Naive thymus-derived CD8-positive, alpha-beta T cell (primary cell): ENCODE measurements at regions of chr4 and their contacts with region 1.

Region 1: DNA sequence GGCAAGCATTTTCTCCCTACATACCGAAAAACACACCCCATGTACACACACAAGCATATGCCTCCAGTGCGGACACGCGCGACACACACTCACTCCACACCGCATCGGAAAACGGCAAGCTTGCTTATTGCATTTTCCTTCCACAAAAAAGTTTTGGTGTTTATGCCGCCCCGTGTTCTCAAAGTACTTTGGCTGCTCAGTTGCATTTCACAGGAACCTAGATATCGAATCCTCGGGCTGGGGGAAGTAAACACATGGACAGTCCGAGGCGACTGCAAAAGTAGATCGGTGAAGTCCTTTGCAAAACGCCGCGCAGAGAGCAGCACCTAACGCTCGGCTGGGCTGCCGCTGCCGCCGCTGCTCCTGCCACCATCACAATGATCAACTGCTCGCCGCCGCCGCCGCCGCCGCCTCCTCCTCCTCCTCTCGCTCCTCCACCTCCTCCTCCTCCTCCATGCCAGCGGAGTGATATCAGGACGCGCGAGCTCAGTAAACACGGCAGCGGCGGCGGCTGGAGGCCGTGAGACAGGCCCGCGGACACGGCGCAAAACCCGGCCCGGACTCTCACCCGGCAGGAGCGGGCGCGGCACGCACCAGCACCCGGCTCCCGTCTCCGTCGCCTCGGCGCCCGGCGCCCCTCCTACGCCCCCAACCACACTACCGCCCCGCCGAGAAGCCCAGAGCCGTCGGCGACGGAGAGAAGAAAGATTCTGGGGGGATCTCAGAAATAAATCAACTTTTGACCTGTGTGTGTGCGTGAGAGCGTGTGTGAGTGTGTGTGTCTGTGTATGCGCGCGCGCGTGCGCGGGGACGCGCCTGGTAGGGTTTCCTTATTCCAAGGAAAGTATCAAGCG is at the start of gene MAML3:
- DNase-seq: peak; percentile 71 to 94 (median 84)
- ATAC-seq: peak; percentile 15 to 20
- H3K4me3 Mint-ChIP-seq: peak within 1 kb of the TSS; percentile 93 to 100 (median 98)
- H3K27ac Mint-ChIP-seq: peak within 1 kb of the TSS; percentile 87 to 96 (median 91)
- H3K4me1 Mint-ChIP-seq: peaks cover 10 to 56% (median 33%) of the 10 kb centered on the region in 4 donors
- H3K27me3 Mint-ChIP-seq: no peaks in the 10 kb centered on the region
- polyA plus RNA-seq, gene MAML3: 0.51 to 1.6 (median 1.4) TPM

Region 2: DNA sequence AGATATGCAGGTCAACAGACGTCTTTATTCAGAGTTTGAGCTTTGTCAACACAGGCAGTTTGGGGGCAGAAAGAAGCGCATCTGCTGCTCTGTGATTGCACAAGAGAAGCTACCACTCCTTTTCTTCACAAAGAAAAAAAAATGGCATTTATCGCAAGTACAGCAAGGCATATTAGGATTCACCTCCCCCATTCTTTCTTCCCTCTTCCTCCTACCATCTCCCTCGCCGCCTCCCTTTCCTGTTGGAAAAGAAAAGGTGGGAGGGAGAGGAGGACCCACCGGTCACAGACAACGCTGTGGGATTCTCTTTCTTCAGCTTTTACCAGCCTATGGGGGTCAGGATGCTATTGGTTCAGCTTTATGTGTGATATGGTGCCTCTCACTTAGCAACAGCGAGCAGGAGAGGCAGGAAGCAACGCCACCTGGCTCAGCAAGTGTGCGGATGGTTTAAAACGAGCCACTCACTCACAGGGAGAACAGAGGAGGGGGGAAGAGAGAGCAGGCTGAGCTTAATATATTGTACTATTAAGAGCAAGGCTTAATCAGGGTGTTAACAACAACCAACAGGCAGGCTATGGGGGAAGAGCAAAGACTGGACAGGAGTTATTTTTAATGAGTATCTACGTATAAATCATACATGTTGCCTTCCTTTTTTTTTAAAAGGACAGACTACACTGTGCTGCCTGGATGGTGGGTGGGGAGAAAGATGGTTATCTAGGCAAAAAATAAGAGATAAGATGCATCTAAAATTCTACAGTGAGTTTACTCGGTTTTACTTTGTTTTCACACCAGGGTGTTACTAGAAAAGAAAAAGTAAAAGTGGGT is 104.7 kb before region 1 on chr4:
- POLR2A ChIA-PET with region 1: interaction called, 43 read pairs
- DNase-seq: peak; percentile 30 to 81 (median 63)
- ATAC-seq: peak; percentile 95 to 97
- H3K4me3 Mint-ChIP-seq: peak overlapping the region; percentile 78 to 94 (median 86)
- H3K27ac Mint-ChIP-seq: peak overlapping the region; percentile 84 to 97 (median 94)
- H3K4me1 Mint-ChIP-seq: peaks cover 20 to 62% (median 57%) of the 10 kb centered on the region in 4 donors
- H3K27me3 Mint-ChIP-seq: no peaks in the 10 kb centered on the region

Region 3: DNA sequence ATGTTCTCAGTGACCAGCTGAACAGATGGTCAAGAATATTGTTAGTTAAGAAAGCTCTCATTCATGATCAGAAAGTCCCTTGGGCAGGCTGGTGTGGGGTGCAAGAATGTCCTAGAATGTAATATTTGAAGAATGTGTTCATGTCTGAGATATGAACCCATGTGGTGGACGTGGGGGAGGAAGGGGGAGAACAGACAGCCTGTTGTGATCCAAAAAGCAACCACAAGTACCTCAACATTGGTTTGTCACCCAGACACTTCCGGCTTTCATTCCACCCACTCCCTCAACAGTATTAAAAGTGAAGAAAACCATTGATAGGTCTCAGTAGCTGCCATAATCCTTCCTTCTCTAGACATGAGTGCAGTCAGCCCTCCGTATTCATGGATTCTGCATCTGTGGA is 82.1 kb before region 1 on chr4:
- POLR2A ChIA-PET with region 1: interaction called, 76 read pairs
- DNase-seq: peak; percentile 16 to 85 (median 64)
- ATAC-seq: peak; percentile 93 to 95
- H3K4me3 Mint-ChIP-seq: peak overlapping the region; percentile 69 to 84 (median 78)
- H3K27ac Mint-ChIP-seq: peak overlapping the region; percentile 88 to 97 (median 92)
- H3K4me1 Mint-ChIP-seq: peaks cover 35 to 63% (median 53%) of the 10 kb centered on the region in 4 donors
- H3K27me3 Mint-ChIP-seq: peaks cover 0 to 4% (median 0%) of the 10 kb centered on the region in 5 donors

Region 4: GRCh38 chr4:140095694-140096482 is 58.1 kb before region 1 on chr4:
- POLR2A ChIA-PET with region 1: interaction called, 10 read pairs
- DNase-seq: peak in 9 of 10 donors; percentile 34 to 80 (median 56)
- ATAC-seq: peak; percentile 68 to 70
- H3K4me3 Mint-ChIP-seq: peak overlapping the region; percentile 71 to 88 (median 78)
- H3K27ac Mint-ChIP-seq: peak overlapping the region; percentile 84 to 98 (median 94)
- H3K4me1 Mint-ChIP-seq: peaks cover 48 to 88% (median 74%) of the 10 kb centered on the region in 4 donors
- H3K27me3 Mint-ChIP-seq: no peaks in the 10 kb centered on the region

Region 5: GRCh38 chr4:140176735-140177134 is 22.8 kb after region 1 on chr4:
- POLR2A ChIA-PET with region 1: no interaction called
- DNase-seq: no peak
- ATAC-seq: no peak
- H3K4me3 Mint-ChIP-seq: no peak overlapping the region
- H3K27ac Mint-ChIP-seq: no peak overlapping the region
- H3K4me1 Mint-ChIP-seq: no peaks in the 10 kb centered on the region
- H3K27me3 Mint-ChIP-seq: peaks cover 0 to 9% (median 2%) of the 10 kb centered on the region in 5 donors

Region 6: GRCh38 chr4:140243278-140243753 is 89.4 kb after region 1 on chr4:
- POLR2A ChIA-PET with region 1: interaction called, 14 read pairs
- DNase-seq: peak in 5 of 10 donors; percentile 13 to 45 (median 22)
- ATAC-seq: peak; percentile 82 to 94
- H3K4me3 Mint-ChIP-seq: peak overlapping the region; percentile 42 to 80 (median 64)
- H3K27ac Mint-ChIP-seq: peak overlapping the region; percentile 24 to 92 (median 86)
- H3K4me1 Mint-ChIP-seq: peaks cover 17 to 43% (median 29%) of the 10 kb centered on the region in 4 donors
- H3K27me3 Mint-ChIP-seq: peaks cover 0 to under 1% (median 0%) of the 10 kb centered on the region in 5 donors

Region 7: DNA sequence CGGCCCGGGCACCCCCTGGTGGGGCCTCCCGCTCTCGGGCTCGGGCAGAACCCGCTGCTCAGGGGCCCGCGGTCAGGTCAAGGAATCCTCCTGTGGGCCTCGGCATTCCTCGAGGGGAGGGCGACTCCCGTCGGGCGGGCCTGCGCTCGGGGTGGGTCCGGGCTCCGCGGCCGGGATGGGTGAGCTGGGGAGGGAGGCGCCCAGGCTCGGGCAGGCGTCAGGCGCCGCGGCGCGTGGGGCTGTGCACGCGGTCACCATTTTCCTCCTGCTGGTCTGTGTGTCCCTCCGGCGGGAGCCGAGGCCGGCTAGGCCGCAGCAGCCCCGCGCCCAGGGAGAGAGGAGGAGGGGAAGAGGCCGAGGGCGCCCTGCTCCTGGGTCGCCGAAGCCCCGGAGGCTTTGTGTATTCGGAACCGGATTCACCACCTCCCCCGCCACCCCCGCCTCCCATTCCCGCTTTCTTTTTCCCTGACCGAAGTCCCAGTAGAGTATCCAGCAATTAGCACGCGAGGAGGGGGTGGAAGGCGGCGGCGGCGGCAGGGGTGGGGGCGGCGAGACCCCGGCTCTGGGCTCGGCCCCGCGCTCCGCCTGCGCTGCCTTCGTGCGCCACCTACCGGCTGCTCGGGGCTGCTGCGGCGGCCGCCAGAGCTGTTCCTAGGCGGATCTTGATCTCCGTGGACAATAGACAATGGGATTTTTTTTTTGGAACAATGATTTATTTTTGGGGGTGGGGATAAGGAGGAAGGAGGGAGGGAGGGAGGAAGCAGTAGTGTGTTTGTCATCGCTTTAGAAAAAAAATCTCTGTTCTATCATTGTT is 99.0 kb after region 1 on chr4:
- POLR2A ChIA-PET with region 1: interaction called, 31 read pairs
- DNase-seq: peak; percentile 37 to 77 (median 63)
- ATAC-seq: peak; percentile 84 to 85
- H3K4me3 Mint-ChIP-seq: peak overlapping the region; percentile 49 to 88 (median 80)
- H3K27ac Mint-ChIP-seq: peak overlapping the region in 4 of 10 donors; percentile 10 to 73 (median 54)
- H3K4me1 Mint-ChIP-seq: peaks cover 8 to 13% (median 10%) of the 10 kb centered on the region in 4 donors
- H3K27me3 Mint-ChIP-seq: peaks cover 1 to 10% (median 5%) of the 10 kb centered on the region in 5 donors